ENCODE measurements at regions of chr3 and their contacts with region 1.

Region 1: GRCh38 chr3:3799173-3800079 is at the start of gene LRRN1:
- DNase-seq: no peak
- ATAC-seq: no peak
- H3K4me3 ChIP-seq: no peak within 1 kb of the TSS
- H3K27ac ChIP-seq: no peak within 1 kb of the TSS
- H3K4me1 ChIP-seq: no peaks in the 10 kb centered on the region
- H3K27me3 ChIP-seq: no peaks in the 10 kb centered on the region
- CTCF ChIP-seq: no peak
- EP300 ChIP-seq: no peak
- POLR2A ChIP-seq: no peak
- RAD21 ChIP-seq: no peak
- polyA plus RNA-seq, gene LRRN1: not detected

Region 2: DNA sequence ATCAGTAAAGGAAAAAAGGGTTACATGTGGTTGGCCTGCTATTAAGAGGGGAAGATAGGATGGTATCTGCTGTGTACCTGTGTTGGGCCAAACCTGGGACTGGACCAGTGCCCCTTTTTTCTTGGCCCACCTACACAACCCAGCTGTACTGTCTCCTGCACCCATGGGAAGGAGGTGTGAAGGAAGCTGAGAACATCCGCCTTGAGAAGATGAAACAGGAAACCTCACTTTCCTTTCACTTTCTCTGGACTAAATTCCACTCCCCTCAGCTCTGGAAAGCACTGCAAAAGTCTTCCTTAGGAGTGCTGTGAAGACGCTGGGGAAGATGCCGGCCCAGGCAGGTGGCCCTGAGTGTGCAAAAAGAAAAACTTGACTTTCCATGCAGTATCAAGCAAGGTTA is 37.4 kb after region 1 on chr3:
- CTCF ChIA-PET with region 1: no interaction called
- POLR2A ChIA-PET with region 1: no interaction called
- in situ Hi-C with region 1: no loop called
- intact Hi-C with region 1: no loop called
- DNase-seq: no peak
- ATAC-seq: no peak
- H3K4me3 ChIP-seq: no peak overlapping the region
- H3K27ac ChIP-seq: no peak overlapping the region
- H3K4me1 ChIP-seq: no peaks in the 10 kb centered on the region
- H3K27me3 ChIP-seq: no peaks in the 10 kb centered on the region
- CTCF ChIP-seq: no peak
- EP300 ChIP-seq: no peak
- POLR2A ChIP-seq: no peak
- RAD21 ChIP-seq: no peak

Region 3: DNA sequence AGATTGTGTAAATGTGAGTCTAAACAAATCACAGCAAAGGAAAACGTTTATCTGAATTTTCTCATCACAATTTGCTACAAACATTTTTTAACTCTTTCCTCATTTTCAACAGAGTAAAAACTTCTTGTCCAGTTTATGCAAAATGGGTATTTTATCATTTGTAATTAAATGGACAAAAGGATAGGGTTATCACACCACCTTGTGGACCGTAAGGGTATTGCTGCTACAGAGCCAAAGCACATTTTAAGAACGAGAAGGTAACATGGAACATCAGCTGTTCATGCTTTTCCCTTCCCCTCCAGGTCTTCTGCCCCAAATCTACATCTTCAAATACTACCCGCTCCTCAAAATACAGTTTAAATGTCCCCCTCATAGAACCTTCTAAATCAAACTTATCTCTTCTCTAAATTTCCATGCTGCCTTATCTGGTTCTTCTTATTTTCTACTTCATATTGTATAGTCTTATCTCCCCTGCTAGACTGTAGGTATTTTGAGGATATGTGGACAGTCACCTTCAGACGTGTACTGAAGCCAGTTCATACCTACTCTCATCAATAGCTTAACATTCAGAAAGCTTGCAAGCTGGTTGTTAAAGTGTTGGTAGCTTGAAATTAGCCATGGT is 491.0 kb after region 1 on chr3:
- CTCF ChIA-PET with region 1: no interaction called
- POLR2A ChIA-PET with region 1: no interaction called
- in situ Hi-C with region 1: loop called (anchors 25 kb)
- intact Hi-C with region 1: no loop called
- DNase-seq: peak; percentile 62 to 76 (median 69)
- ATAC-seq: peak; percentile 84
- H3K4me3 ChIP-seq: no peak overlapping the region
- H3K27ac ChIP-seq: no peak overlapping the region
- H3K4me1 ChIP-seq: no peaks in the 10 kb centered on the region
- H3K27me3 ChIP-seq: no peaks in the 10 kb centered on the region; a peak in 1 of 5 replicates
- CTCF ChIP-seq: peak; percentile 68 to 91 (median 86)
- EP300 ChIP-seq: no peak
- POLR2A ChIP-seq: no peak
- RAD21 ChIP-seq: peak; percentile 96 to 97

Measured in K562 (cell line).